ENCODE measurements at regions of chr2 and their contacts with region 1.

Region 1: GRCh38 chr2:44680983-44681531 is 260.4 kb upstream of the SIX3 start:
- DNase-seq: no peak
- ATAC-seq: no peak
- H3K4me3 ChIP-seq: no peak overlapping the region
- H3K27ac ChIP-seq: no peak overlapping the region
- H3K4me1 ChIP-seq: peaks cover 0 to 7% (median 0%) of the 10 kb centered on the region in 9 donors
- H3K27me3 ChIP-seq: no peaks in the 10 kb centered on the region
- CTCF ChIP-seq: no peak

Region 2: DNA sequence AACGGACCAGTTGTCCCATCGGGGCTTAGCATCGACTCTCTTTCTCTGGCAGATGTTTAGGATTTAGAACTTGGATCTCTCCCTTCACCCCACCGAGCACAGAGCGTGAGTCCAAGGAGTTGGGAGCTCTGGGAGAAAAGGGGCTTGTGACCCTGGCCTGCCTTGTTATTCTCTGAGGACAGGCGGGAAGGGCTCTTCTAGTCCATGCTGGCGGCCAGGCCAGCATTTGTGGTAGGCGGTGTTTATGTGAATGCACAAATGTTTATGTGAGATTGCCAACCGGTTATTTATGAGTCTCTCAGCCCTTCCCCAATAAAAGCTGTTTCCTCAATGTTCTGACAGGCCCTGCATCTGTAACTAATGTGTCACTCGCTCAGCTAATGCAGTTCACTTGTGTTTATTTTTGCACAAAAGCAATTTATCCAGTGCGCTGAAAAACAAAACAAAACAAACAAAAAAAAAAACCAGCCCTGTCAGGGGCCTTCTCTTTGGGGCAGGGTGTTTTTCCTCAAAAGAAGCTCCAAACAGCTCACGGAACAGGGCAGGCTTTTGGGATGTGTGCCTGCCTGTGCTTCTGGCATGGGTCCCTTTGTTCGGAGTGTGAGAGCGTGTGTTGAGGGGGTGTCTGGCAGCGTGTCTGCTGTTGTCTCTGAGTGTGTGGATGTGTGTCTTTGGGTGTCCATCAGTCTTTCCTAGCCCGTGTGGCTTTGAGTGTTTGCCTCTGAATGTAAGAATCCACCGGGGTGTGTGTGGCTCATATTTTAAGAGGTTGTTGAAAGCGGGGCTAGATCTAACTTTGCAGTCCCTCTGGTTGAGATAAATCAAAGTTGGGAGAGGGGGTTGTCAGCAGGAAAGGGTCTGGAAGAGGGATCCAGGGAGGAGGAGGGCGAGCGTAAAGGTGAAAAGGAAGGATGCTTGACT is 1835.9 kb before region 1 on chr2:
- intact Hi-C with region 1: loop called in 1 of 10 experiments (anchors 5 kb)
- DNase-seq: no peak
- ATAC-seq: peak in 6 of 8 donors; percentile 12 to 60 (median 45)
- H3K4me3 ChIP-seq: no peak overlapping the region
- H3K27ac ChIP-seq: peak overlapping the region in 8 of 10 donors; percentile 4 to 71 (median 44)
- H3K4me1 ChIP-seq: peaks cover 0 to 29% (median 12%) of the 10 kb centered on the region in 9 donors
- H3K27me3 ChIP-seq: no peaks in the 10 kb centered on the region
- CTCF ChIP-seq: no peak

Region 3: DNA sequence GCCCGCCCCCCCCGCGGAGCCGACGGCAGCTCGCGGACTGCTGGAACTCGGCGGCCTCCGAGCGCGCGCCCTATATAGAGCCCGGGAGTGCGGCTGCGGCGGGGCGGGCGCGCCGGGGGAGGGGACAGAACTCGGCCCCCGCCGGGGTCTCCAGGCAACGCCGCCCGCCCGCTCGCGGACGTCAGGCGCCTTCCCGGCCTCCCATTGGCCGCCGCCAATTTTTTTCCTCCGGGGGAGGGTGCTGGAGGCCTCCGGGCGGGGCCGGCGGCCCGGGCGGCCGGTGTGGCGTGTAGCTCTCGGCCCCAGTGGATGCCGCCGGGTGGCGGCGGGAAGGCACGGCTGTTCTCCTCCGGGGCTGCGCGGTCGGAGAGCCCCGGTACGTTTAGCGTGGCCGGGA is 1454.5 kb before region 1 on chr2 and contains the start of gene ZFP36L2:
- intact Hi-C with region 1: no loop called
- DNase-seq: peak; percentile 96 to 98
- ATAC-seq: peak; percentile 77 to 92 (median 82)
- H3K4me3 ChIP-seq: peak within 1 kb of the TSS; percentile 72 to 97 (median 90)
- H3K27ac ChIP-seq: peak within 1 kb of the TSS; percentile 96 to 100 (median 99)
- H3K4me1 ChIP-seq: peaks cover 0 to 61% (median 47%) of the 10 kb centered on the region in 9 donors
- H3K27me3 ChIP-seq: no peaks in the 10 kb centered on the region
- CTCF ChIP-seq: peak in 2 of 9 donors; percentile 13 to 17
- total RNA-seq, gene ZFP36L2: 34.4 to 69.6 (median 42.3) TPM

Region 4: GRCh38 chr2:44655401-44655864 is 25.6 kb before region 1 on chr2:
- intact Hi-C with region 1: no loop called
- DNase-seq: no peak
- ATAC-seq: no peak
- H3K4me3 ChIP-seq: no peak overlapping the region
- H3K27ac ChIP-seq: no peak overlapping the region
- H3K4me1 ChIP-seq: peaks cover 0 to 6% (median 0%) of the 10 kb centered on the region in 9 donors
- H3K27me3 ChIP-seq: no peaks in the 10 kb centered on the region
- CTCF ChIP-seq: no peak

Region 5: GRCh38 chr2:45046786-45047185 is 365.7 kb after region 1 on chr2:
- intact Hi-C with region 1: no loop called
- DNase-seq: no peak
- ATAC-seq: no peak
- H3K4me3 ChIP-seq: no peak overlapping the region
- H3K27ac ChIP-seq: no peak overlapping the region
- H3K4me1 ChIP-seq: no peaks in the 10 kb centered on the region
- H3K27me3 ChIP-seq: peaks cover 0 to 32% (median 16%) of the 10 kb centered on the region in 7 donors
- CTCF ChIP-seq: no peak